ENCODE measurements at regions of chr1 and their contacts with region 1.

Region 1: GRCh38 chr1:202968840-202969295 is 1.8 kb upstream of the CYB5R1 start:
- DNase-seq: no peak
- ATAC-seq: peak; percentile 58

Region 2: DNA sequence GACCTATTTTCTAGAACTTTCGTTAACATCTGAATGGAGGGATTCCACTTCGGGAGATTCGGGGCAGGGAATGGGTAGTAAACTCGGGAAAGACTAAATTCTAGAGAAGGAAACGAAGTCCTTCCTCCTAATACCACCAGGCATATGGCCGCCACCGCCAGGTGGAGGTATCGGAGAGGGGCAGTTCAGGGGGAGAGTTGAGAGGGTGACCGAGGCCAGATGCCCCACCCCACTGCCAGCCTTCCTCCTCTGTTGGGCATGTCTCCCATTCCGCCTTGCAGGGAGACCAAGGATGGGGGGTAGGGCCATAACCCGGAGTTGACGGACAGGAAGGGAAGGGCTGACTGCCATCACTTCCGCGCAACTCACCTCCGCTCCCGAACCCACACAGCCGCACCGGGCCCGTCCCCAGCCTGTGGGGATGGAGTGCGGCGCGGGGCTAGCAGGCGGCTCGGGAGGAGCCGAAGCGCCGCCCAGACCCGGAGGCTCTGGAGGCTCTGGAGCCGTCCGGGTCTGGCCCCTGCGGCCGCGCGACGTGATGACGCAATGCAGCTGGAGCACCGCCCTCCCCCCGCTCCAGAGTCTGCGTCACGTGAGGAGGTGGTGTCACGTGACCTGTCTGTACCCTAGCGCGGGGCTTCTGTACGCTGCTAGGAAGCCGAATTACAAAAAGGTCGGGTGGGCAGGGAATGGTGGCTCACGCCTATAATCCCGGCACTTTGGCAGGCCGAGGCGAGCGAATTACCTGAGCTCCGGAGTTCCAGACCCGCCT is 42.0 kb before region 1 on chr1 and contains the start of gene KLHL12:
- intact Hi-C with region 1: loop called (anchors 1 kb)
- DNase-seq: peak; percentile 99
- ATAC-seq: peak; percentile 99
- total RNA-seq, gene KLHL12: 19.3 TPM

Region 3: DNA sequence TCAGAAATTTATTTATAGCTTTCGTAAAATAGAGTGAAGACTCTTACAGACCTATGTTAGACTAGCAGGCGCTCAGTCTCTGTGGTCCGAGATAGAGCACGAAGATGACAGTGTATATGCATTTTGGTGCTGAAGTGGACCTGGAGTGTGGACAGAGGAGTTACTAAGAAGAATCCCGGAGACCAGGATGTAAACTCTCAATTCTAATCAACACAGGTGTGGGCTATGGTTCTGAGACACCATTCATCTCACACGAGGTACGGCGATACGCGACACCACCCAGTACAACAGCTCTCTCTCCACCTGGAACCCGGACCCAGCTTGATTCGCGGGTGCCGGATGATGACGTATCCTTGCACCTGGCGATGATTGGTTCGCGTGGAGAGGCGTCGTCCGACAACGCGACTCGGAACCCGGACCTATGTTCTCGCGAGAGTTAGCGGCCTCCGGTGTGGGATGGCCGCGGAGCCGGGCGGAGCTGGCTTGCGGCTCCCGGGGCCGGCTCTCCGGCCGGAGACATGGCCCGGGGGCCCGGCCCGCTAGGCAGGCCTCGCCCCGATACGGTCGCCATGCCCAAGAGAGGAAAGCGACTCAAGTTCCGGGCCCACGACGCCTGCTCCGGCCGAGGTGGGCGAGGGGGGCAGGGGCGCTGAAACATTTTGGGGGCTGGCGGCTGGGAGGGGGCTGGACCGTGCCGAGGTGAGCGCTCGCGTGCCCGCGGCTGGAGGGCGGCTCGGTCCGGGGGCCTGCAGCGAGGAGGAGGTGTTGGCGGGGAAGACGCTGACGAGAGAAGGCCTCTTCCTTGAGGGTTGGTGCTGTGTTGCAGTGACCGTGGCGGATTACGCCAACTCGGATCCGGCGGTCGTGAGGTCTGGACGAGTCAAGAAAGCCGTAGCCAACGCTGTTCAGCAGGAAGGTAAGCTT is 38.3 kb after region 1 on chr1 and contains the start of gene TMEM183A:
- intact Hi-C with region 1: loop called (anchors 5 kb)
- DNase-seq: peak; percentile 97
- ATAC-seq: peak; percentile 97
- total RNA-seq, gene TMEM183A: 24.0 TPM

Region 4: DNA sequence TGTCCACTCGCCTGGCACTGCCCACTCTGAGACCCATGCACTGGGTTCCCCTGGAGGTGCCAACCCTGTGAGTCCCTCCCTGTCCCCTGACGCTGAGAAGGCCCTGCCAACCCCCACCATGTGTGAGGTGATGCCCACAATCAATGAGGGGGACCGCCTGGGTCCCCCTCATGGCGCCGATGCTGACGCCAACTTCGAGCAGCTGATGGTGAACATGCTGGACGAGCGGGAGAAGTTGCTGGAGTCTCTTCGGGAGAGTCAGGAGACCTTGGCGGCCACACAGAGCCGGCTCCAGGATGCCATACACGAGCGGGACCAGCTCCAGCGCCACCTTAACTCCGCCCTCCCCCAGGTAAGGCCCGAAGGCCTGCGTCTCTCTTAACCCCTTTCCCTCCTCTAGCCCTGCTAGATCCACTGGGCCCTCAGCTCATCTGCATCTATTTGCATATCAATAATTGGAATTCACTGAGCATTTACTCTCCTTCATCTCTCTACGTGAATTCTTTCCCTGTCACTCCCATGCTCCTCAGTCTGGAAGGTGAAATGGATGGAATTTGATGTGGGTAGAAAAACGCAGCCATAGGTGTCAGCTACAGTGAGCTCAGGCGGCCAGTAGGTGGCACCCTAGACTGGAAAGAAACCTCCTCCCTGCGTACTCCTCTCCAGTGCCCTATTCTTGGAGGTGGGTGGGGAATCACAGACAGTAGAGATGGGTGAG is 70.2 kb after region 1 on chr1:
- intact Hi-C with region 1: no loop called
- DNase-seq: peak; percentile 87
- ATAC-seq: peak; percentile 85